Psoas muscle (tissue), 8 donors: ENCODE measurements at regions of chr18 and their contacts with region 1.

Region 1: DNA sequence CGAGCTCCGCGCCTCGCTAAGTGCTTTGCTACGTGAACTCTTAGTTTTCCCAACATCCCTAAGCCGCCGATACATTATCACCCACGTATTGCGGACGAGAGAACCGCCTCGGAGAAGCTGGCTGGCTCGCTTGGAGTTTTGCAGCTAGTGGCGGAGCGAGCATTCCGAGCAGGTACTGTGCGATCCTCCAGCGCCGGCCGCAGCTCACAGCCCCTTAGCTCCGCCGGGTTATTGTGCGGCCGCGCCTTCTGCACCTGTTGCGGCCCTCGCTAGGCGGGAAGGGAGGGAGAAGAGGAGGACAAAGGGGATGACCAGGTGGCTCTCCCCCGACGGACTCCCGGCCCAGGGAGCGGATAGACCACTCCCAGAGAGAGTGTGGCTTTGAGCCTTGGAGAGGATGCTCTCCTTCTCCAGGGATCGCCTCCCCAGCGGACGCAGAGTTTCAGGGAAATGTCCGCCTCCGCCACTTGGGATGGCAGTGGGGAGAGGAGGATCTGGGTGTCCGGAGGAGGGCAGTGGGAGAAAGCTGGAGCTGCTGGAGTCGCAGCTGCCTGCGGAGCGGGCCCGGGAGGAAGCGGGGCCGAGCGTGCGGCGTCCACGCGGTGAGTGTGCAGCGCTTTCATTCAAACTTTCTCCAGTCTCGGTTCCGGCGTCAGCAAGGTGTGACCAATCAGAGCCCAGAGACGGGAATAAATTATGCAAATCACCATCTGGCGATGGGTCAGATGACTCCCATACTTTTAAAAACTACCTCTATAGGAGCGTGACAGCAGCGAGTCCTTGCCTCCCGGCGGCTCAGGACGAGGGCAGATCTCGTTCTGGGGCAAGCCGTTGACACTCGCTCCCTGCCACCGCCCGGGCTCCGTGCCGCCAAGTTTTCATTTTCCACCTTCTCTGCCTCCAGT is at the start of gene LIPG:
- DNase-seq: peak; percentile 25 to 49
- ATAC-seq: peak; percentile 57 to 77 (median 73)
- H3K4me3 ChIP-seq: peak within 1 kb of the TSS; percentile 57
- H3K27ac ChIP-seq: no peak within 1 kb of the TSS
- H3K4me1 ChIP-seq: peaks cover 21% of the 10 kb centered on the region
- H3K27me3 ChIP-seq: peaks cover 0 to 56% (median 4%) of the 10 kb centered on the region in 3 donors
- CTCF ChIP-seq: no peak
- total RNA-seq, gene LIPG: 0.95 to 19.1 (median 3.2) TPM

Region 2: GRCh38 chr18:49728542-49728941 is 167.0 kb after region 1 on chr18:
- intact Hi-C with region 1: loop called in 1 of 2 experiments (anchors 5 kb)
- DNase-seq: peak; percentile 26 to 53
- ATAC-seq: peak in 2 of 4 donors; percentile 44 to 49
- H3K4me3 ChIP-seq: no peak overlapping the region
- H3K27ac ChIP-seq: no peak overlapping the region
- H3K4me1 ChIP-seq: no peaks in the 10 kb centered on the region
- H3K27me3 ChIP-seq: no peaks in the 10 kb centered on the region
- CTCF ChIP-seq: peak; percentile 57

Region 3: DNA sequence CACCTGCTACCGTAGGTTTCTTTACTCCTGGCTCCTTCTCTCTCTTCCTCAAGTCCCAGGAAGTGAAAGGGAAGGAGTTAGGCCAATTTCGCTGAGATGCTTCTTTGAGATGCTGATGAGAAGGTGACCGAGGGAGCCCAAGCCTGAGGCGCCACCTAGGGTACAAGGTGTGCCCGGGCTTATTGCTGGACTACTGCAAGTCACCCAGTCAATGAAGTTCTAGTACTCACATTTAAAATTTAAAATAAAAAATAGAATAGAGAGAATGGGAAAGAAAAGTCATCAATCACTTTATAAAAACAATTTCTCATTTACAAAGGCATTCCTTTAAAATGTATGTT is 206.5 kb after region 1 on chr18:
- intact Hi-C with region 1: loop called in 1 of 2 experiments (anchors 2 kb)
- DNase-seq: peak; percentile 30 to 61
- ATAC-seq: peak in 2 of 4 donors; percentile 38 to 59
- H3K4me3 ChIP-seq: no peak overlapping the region
- H3K27ac ChIP-seq: no peak overlapping the region
- H3K4me1 ChIP-seq: no peaks in the 10 kb centered on the region
- H3K27me3 ChIP-seq: no peaks in the 10 kb centered on the region
- CTCF ChIP-seq: peak; percentile 48

Region 4: DNA sequence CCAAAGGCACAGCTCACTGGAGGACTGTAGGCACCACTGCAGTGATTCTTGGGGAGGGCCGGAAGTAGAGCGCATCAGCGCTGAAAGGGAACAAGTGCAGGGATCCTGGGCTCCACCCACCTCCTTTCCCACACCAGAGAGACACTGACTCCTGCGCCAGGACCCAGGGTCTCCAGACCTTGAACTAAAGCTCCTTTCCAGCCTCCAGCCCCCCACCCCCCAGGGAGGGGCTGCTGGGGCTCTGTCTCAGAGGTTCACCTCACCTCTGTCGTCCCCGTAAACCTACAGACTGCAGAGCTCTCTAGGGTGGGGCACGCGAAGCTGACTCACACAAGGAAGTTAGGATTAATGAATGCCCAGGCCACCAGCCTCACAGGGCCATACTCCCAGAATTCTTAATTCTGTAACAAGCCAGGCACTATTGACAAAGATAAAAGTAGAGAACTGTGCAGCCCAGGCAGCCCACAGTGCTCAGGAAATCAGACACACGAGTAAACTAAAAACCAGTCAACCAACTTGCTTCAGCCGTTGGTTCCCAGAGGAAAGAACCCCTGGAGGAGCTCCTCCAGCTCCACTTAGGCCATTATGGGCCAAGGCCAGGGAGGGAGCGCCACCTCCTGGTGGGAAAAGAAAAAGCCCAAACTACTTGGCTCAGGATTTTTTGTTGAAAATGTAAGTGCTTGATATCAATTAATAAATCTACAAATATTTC is 296.9 kb after region 1 on chr18:
- intact Hi-C with region 1: loop called in 1 of 2 experiments (anchors 2 kb)
- DNase-seq: peak; percentile 52 to 73
- ATAC-seq: peak; percentile 69 to 77 (median 74)
- H3K4me3 ChIP-seq: no peak overlapping the region
- H3K27ac ChIP-seq: no peak overlapping the region
- H3K4me1 ChIP-seq: no peaks in the 10 kb centered on the region
- H3K27me3 ChIP-seq: no peaks in the 10 kb centered on the region
- CTCF ChIP-seq: peak; percentile 93

Region 5: DNA sequence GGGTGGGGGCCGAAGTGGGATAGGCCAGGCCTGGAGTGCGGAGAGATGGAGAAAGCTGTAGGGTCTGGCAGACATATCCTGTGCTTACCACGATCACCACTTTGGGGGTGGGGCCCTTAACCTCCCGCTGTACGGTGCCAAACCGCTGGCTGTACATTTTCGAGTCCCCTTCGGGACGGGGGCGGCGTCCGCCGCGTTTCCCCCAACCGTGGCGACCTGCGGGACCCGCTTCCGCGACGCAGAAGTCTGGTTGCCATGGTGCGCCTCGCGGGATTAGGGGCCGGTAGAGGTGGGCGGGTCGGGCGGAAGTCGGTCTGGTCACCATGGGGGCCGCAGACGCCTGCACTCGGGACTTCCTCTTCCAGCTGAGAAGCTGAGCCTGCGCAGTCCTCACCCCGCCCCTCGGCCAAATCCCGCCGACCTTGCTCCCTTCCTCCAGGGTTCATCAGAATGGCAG is 704.7 kb after region 1 on chr18 and contains the start of gene CFAP53:
- intact Hi-C with region 1: no loop called
- DNase-seq: peak; percentile 93 to 94
- ATAC-seq: peak; percentile 94 to 97 (median 96)
- H3K4me3 ChIP-seq: peak within 1 kb of the TSS; percentile 85
- H3K27ac ChIP-seq: no peak within 1 kb of the TSS
- H3K4me1 ChIP-seq: peaks cover 4% of the 10 kb centered on the region
- H3K27me3 ChIP-seq: no peaks in the 10 kb centered on the region
- CTCF ChIP-seq: no peak
- total RNA-seq, gene CFAP53: 0.37 to 1.6 (median 0.51) TPM